Activated CD4-positive, alpha-beta memory T cell treated with anti-CD3 and anti-CD28 coated beads, Interleukin-2, amount 10 ng/mL, durations not matched to agents 7 days and 5 days (primary cell): ENCODE measurements at regions of chr11 and their contacts with region 1.

Region 1: GRCh38 chr11:73350908-73351636 is 25.1 kb upstream of the RELT start:
- DNase-seq: peak; percentile 70
- H3K4me3 Mint-ChIP-seq: no peak overlapping the region
- H3K27ac Mint-ChIP-seq: no peak overlapping the region
- H3K4me1 Mint-ChIP-seq: peaks cover 27% of the 10 kb centered on the region
- H3K27me3 Mint-ChIP-seq: peaks cover 3% of the 10 kb centered on the region

Region 2: GRCh38 chr11:73325036-73325981 is 25.8 kb before region 1 on chr11:
- CTCF ChIA-PET with region 1: interaction called, 17 read pairs
- POLR2A ChIA-PET with region 1: no interaction called
- DNase-seq: no peak
- H3K4me3 Mint-ChIP-seq: no peak overlapping the region
- H3K27ac Mint-ChIP-seq: no peak overlapping the region
- H3K4me1 Mint-ChIP-seq: no peaks in the 10 kb centered on the region
- H3K27me3 Mint-ChIP-seq: no peaks in the 10 kb centered on the region

Region 3: GRCh38 chr11:73366265-73366610 is 15.2 kb after region 1 on chr11:
- CTCF ChIA-PET with region 1: interaction called, 139 read pairs
- POLR2A ChIA-PET with region 1: interaction called, 13 read pairs
- DNase-seq: peak; percentile 56
- H3K4me3 Mint-ChIP-seq: peak overlapping the region; percentile 59
- H3K27ac Mint-ChIP-seq: peak overlapping the region; percentile 86
- H3K4me1 Mint-ChIP-seq: peaks cover 23% of the 10 kb centered on the region
- H3K27me3 Mint-ChIP-seq: no peaks in the 10 kb centered on the region

Region 4: DNA sequence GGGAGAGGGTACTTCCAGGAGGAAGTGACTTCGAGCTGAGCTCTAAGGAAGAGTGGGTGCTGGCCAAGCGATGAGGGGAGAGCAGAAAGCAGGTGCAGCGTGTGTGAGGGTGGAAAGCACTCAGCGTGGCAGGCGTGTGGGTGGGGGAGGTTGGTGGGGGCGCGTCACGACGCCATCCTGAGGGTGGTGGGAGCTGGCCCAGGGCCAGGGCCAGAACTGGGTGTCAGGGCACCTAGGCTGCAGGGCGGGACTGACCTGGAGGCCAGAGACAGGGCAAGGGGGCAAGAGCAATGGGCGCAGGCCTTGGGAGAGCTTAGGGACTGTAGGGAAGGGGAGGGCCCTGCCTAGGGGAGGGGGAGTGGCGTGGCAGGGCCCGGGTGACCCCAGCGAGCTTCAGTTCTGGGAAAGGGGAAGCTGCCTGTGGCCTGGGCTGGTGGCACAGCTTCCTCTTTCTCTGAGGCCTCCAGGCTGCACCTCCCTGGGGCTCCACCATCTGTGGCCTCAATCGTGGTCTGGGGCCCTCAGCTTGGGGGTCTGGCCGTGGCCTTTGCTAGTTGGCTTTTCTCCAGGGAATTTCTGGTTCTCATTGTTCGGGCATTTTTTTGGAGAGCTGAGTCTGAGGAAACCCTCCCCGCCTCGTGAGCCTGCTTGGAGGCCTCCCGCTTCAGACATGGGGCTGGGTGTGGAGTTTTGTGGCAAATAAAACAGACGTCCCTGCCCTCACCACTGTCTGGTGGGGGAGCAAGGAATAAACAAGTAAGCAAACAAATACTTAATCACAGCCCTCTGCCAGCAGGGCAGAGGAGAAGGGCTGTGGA is 34.0 kb after region 1 on chr11:
- CTCF ChIA-PET with region 1: interaction called, 35 read pairs
- POLR2A ChIA-PET with region 1: interaction called, 4 read pairs
- DNase-seq: peak; percentile 43
- H3K4me3 Mint-ChIP-seq: peak overlapping the region; percentile 24
- H3K27ac Mint-ChIP-seq: peak overlapping the region; percentile 81
- H3K4me1 Mint-ChIP-seq: peaks cover 72% of the 10 kb centered on the region
- H3K27me3 Mint-ChIP-seq: no peaks in the 10 kb centered on the region

Region 5: GRCh38 chr11:73404048-73404447 is 53.0 kb after region 1 on chr11:
- CTCF ChIA-PET with region 1: interaction called, 32 read pairs
- POLR2A ChIA-PET with region 1: interaction called, 4 read pairs
- DNase-seq: no peak
- H3K4me3 Mint-ChIP-seq: no peak overlapping the region
- H3K27ac Mint-ChIP-seq: no peak overlapping the region
- H3K4me1 Mint-ChIP-seq: no peaks in the 10 kb centered on the region
- H3K27me3 Mint-ChIP-seq: no peaks in the 10 kb centered on the region

Region 6: GRCh38 chr11:73661035-73661628 is 310.1 kb after region 1 on chr11:
- CTCF ChIA-PET with region 1: interaction called, 28 read pairs
- POLR2A ChIA-PET with region 1: no interaction called
- DNase-seq: peak; percentile 83
- H3K4me3 Mint-ChIP-seq: no peak overlapping the region
- H3K27ac Mint-ChIP-seq: no peak overlapping the region
- H3K4me1 Mint-ChIP-seq: peaks cover 7% of the 10 kb centered on the region
- H3K27me3 Mint-ChIP-seq: no peaks in the 10 kb centered on the region